AG04450 (cell line): ENCODE measurements at regions of chr4 and their contacts with region 1.

Region 1: GRCh38 chr4:25159884-25160713 is at the start of gene SEPSECS:
- DNase-seq: peak; percentile 94
- H3K4me3 ChIP-seq: peak within 1 kb of the TSS; percentile 89
- H3K27ac ChIP-seq: peak within 1 kb of the TSS; percentile 82
- H3K27me3 ChIP-seq: no peaks in the 10 kb centered on the region
- CTCF ChIP-seq: no peak
- polyA plus RNA-seq, gene SEPSECS: 4.7 and 6.2 TPM in 2 replicates

Region 2: DNA sequence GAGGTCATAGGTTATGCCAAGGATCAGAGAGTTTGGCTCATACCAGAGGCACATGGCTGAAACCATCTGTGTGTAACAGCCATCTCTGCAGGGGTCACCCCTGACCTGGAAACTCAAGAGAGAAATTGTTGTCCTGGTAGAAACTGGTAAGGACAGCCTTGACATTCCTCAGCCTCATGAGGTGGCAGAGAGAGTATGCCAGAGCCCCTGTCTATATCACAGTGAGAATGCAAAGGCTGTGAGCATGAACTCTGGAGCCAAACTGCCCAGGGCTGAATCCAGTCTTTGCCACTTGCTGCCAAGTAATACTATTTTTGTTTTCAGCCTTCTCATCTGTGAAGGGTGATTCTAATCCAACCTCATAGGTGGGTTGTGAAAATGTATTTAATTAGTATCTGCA is 210.1 kb before region 1 on chr4:
- CTCF ChIA-PET with region 1: no interaction called
- POLR2A ChIA-PET with region 1: no interaction called
- DNase-seq: no peak
- H3K4me3 ChIP-seq: no peak overlapping the region
- H3K27ac ChIP-seq: no peak overlapping the region
- H3K27me3 ChIP-seq: peaks cover 10% of the 10 kb centered on the region
- CTCF ChIP-seq: no peak

Region 3: GRCh38 chr4:25172961-25173915 is 13.1 kb after region 1 on chr4:
- CTCF ChIA-PET with region 1: interaction called, 3 read pairs
- POLR2A ChIA-PET with region 1: interaction called, 10 read pairs
- DNase-seq: peak; percentile 96
- H3K4me3 ChIP-seq: peak overlapping the region; percentile 17; the same call in 1 of the 2 replicates
- H3K27ac ChIP-seq: peak overlapping the region; percentile 72
- H3K27me3 ChIP-seq: no peaks in the 10 kb centered on the region
- CTCF ChIP-seq: no peak

Region 4: DNA sequence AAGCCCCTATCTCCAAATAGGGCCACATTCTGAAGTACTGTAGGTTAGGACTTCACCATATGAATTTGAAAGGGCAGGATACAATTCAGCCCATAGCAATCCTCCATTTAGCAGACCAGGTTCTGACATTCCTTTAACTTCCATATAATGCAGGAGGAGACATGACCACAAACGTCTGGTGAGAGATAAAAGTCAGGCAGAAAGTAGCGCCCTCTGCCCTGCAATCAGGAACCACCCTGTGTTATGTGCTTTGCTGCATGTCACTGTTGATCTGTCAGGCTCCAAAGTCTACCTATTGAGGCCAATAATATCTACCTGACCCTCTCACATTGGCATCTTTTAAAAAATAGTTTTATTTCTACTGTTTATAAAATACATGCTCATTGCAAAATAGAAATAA is 30.3 kb after region 1 on chr4:
- CTCF ChIA-PET with region 1: no interaction called
- POLR2A ChIA-PET with region 1: no interaction called
- DNase-seq: no peak
- H3K4me3 ChIP-seq: no peak overlapping the region
- H3K27ac ChIP-seq: no peak overlapping the region
- H3K27me3 ChIP-seq: no peaks in the 10 kb centered on the region
- CTCF ChIP-seq: no peak